PC-3 (cell line): ENCODE measurements at regions of chr3 and their contacts with region 1.

Region 1: DNA sequence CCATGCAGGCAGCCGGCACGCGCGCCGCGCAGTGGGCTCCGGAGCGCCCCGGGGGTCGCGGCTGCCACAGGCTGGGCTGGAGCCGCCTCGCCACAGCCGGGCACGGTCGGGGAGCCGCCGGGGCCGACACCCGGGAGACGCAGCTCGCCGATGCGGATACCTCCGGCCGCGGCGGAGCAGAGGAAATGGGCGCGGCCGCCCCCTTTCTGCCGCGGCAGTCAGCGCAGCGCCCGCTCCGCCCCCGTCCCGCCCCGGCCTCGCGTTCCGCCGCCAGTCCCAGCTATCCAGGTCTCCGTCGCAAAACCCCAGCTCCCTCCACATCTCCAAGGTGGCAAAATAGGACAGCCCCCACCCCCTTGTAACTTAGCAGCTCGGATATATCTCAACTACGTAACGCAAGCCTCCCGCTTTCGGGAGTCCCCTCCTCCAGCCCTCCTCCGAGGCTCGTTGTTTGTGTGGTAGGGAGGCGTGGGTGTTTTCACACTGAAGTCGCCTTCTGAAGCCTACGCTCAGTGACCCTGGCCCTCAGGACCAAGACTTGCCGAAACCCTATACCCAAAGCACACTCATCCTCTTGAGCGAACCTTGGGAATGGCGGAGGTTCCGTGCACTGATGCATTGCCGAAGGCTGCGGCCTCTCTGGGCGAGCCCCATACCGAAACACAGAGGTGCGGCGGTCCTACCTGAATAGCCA is at the start of gene SH3BP5:
- DNase-seq: peak; percentile 81
- ATAC-seq: peak; percentile 76
- H3K4me3 ChIP-seq: peak within 1 kb of the TSS; percentile 99
- H3K27ac ChIP-seq: no peak within 1 kb of the TSS
- H3K4me1 ChIP-seq: peaks cover 29% of the 10 kb centered on the region
- H3K27me3 ChIP-seq: no peaks in the 10 kb centered on the region
- CTCF ChIP-seq: peak; percentile 51; the same call in 1 of the 2 replicates
- total RNA-seq, gene SH3BP5: 21.2 and 23.0 TPM in 2 replicates

Region 2: GRCh38 chr3:15309662-15310335 is 22.8 kb before region 1 on chr3:
- CTCF ChIA-PET with region 1: no interaction called
- POLR2A ChIA-PET with region 1: no interaction called
- intact Hi-C with region 1: loop called (anchors 2 kb)
- DNase-seq: peak; percentile 61
- ATAC-seq: 0 out of 2 replicates have a peak, but pooled peaks have one; percentile 7
- H3K4me3 ChIP-seq: no peak overlapping the region
- H3K27ac ChIP-seq: peak overlapping the region; percentile 74
- H3K4me1 ChIP-seq: peaks cover 35% of the 10 kb centered on the region
- H3K27me3 ChIP-seq: no peaks in the 10 kb centered on the region
- CTCF ChIP-seq: no peak

Region 3: GRCh38 chr3:15319575-15319974 is 13.0 kb before region 1 on chr3:
- CTCF ChIA-PET with region 1: no interaction called
- POLR2A ChIA-PET with region 1: interaction called, 15 read pairs
- intact Hi-C with region 1: no loop called
- DNase-seq: no peak
- ATAC-seq: no peak
- H3K4me3 ChIP-seq: no peak overlapping the region
- H3K27ac ChIP-seq: peak overlapping the region; percentile 43
- H3K4me1 ChIP-seq: peaks cover 37% of the 10 kb centered on the region
- H3K27me3 ChIP-seq: no peaks in the 10 kb centered on the region
- CTCF ChIP-seq: no peak

Region 4: GRCh38 chr3:15377961-15378791 is 45.6 kb after region 1 on chr3:
- CTCF ChIA-PET with region 1: interaction called, 5 read pairs
- POLR2A ChIA-PET with region 1: no interaction called
- intact Hi-C with region 1: loop called (anchors 1 kb)
- DNase-seq: peak; percentile 97
- ATAC-seq: peak; percentile 98
- H3K4me3 ChIP-seq: no peak overlapping the region
- H3K27ac ChIP-seq: 0 out of 2 replicates have a peak overlapping the region, but pooled peaks have one; percentile 6
- H3K4me1 ChIP-seq: no peaks in the 10 kb centered on the region
- H3K27me3 ChIP-seq: no peaks in the 10 kb centered on the region
- CTCF ChIP-seq: peak; percentile 92

Region 5: DNA sequence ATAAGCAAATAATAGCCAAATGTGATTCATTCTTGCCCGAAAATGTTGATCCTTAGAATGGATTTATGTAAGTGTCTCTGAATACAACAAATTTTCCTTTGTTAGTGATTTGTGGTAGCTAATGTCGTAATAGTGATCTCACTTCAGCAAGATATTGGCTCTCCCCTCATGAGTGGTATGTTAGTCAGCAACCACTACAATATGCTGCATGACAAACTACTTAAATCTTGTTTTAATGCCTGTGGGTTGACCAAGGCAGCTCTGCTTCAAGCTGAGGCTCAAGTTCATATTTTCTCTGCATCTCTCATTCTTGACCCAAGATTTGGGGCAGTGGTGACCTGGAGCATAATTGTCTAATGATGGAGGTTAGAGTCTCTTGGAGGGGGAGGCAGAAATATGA is 792.1 kb after region 1 on chr3:
- CTCF ChIA-PET with region 1: no interaction called
- POLR2A ChIA-PET with region 1: interaction called, 45 read pairs
- intact Hi-C with region 1: no loop called
- DNase-seq: peak; percentile 94
- ATAC-seq: peak; percentile 95
- H3K4me3 ChIP-seq: no peak overlapping the region
- H3K27ac ChIP-seq: peak overlapping the region; percentile 86
- H3K4me1 ChIP-seq: peaks cover 18% of the 10 kb centered on the region
- H3K27me3 ChIP-seq: no peaks in the 10 kb centered on the region
- CTCF ChIP-seq: no peak